Endothelial cell of umbilical vein (primary cell): ENCODE measurements at regions of chr6 and their contacts with region 1.

Region 1: DNA sequence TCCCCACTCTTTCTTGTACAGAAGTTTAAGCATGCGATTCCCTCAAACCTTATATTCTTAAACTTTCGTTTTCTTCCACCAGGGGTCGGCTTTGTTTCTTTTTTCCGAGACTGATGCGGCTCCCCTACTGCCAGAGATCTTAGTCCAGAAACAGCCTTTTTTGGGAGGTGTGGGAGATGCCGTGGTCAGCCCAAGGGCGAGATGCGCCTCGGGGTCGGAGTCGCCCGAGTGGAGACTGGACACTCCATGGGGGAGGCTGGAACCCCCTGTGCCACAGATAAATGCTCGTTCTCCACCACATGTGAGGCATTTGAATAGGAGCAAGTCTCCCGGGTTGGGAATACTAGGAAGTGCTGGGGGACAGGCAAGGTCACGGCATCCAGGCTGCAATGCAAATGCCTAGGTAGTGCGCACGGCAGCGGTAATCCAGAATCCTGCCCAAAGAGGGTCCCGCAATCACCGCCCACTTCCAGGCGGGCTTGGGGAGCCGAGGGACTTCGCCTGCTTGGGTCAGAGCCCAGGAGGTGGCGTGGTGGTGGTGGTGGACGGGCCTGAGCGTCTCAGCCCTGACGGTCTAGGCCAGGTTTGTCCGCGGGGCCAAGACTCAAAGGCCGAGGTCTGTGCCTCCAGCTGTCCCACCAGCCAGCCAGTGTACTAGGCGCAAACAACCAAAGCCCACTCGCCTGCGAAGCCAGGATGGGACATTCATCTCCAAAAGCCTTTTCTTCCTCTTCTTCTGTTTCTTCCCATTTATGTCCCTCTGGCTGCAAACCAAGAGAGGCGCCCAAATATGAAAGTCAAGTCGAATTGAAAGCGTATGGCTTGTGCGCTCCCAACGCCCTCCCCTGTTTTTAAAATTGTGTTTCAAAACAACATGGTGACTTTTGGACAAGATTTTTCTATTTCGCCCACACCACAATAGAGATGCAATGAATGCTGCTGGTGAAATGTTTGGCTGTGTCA is 39.3 kb upstream of the OSTM1 start:
- DNase-seq: peak; percentile 67
- H3K4me3 ChIP-seq: no peak overlapping the region
- H3K27ac ChIP-seq: no peak overlapping the region
- H3K4me1 ChIP-seq: peaks cover 24% of the 10 kb centered on the region
- H3K27me3 ChIP-seq: peaks cover 57 to 70% of the 10 kb centered on the region in 2 experiments
- CTCF ChIP-seq: peak; percentile 16 to 32
- POLR2A ChIP-seq: no peak

Region 2: DNA sequence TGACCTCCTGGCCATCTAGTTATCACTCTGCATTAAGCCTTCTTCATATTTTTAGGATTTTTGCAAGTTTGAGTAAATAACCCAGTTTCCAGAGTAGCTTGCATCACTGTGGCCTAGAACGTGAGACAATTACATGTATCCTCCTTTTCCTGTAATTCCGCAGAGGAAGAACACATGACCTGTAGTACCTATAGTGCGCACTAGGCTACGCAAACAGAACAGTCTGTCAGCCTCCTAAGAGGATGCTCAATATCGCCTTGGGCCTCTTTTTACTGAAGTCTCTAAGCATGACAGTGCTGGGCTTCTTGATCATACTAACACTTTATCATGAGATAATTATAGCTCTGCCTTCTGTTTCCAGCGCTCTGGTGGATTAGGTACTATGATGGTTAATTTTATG is 31.8 kb after region 1 on chr6:
- CTCF ChIA-PET with region 1: no interaction called
- POLR2A ChIA-PET with region 1: no interaction called
- dilution Hi-C with region 1: no loop called
- intact Hi-C with region 1: no loop called
- DNase-seq: no peak
- H3K4me3 ChIP-seq: no peak overlapping the region
- H3K27ac ChIP-seq: no peak overlapping the region
- H3K4me1 ChIP-seq: no peaks in the 10 kb centered on the region
- H3K27me3 ChIP-seq: peaks cover 18 to 34% of the 10 kb centered on the region in 2 experiments
- CTCF ChIP-seq: no peak
- POLR2A ChIP-seq: no peak

Region 3: DNA sequence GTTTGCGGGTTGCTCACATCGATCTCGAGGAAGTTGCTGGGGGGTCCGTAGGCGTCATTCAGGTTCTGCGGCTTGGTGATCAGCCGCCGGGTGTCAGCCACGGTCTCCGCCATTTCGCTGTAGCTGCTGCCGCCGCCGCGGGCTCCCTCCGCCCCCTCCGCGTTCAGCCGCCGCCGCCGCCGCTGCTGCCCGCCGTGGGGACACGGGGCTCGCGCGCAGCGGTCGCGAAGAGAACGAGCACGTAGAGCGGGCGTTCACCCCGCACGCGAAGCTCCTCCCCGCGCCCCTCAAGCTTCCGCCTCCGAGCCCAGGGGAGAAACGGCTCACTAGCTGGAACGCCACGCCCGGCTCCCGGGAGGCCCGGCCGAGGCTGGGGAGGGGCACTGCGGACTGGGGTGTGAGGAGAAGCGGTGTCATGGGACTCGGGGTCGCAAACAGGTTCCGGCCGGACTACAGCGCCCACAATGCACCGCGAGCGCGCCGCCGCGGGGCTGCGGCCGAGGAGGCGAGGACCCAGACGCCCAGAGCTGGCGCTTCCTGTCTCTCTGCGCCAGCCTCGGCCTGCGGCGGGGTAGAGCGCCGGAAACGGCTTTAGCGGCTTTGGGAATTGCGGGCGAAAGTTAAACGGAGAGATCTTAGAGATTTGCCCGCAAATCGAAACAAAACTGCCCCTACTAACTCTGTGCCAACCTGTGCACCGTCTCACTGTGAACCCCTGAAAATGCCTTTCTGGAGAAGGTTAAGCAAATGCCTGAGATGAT is 147.2 kb after region 1 on chr6 and contains the start of gene SNX3:
- CTCF ChIA-PET with region 1: interaction called, 6 read pairs
- POLR2A ChIA-PET with region 1: no interaction called
- dilution Hi-C with region 1: no loop called
- intact Hi-C with region 1: loop called (anchors 1 kb)
- DNase-seq: peak; percentile 98
- H3K4me3 ChIP-seq: peak within 1 kb of the TSS; percentile 81 to 95 (median 85)
- H3K27ac ChIP-seq: peak within 1 kb of the TSS; percentile 59
- H3K4me1 ChIP-seq: peaks cover 14% of the 10 kb centered on the region
- H3K27me3 ChIP-seq: no peaks in the 10 kb centered on the region
- CTCF ChIP-seq: peak in 1 of 2 donors; percentile 2
- POLR2A ChIP-seq: peak; percentile 63
- total RNA-seq, gene SNX3: 141 and 155 TPM in 2 replicates

Region 4: DNA sequence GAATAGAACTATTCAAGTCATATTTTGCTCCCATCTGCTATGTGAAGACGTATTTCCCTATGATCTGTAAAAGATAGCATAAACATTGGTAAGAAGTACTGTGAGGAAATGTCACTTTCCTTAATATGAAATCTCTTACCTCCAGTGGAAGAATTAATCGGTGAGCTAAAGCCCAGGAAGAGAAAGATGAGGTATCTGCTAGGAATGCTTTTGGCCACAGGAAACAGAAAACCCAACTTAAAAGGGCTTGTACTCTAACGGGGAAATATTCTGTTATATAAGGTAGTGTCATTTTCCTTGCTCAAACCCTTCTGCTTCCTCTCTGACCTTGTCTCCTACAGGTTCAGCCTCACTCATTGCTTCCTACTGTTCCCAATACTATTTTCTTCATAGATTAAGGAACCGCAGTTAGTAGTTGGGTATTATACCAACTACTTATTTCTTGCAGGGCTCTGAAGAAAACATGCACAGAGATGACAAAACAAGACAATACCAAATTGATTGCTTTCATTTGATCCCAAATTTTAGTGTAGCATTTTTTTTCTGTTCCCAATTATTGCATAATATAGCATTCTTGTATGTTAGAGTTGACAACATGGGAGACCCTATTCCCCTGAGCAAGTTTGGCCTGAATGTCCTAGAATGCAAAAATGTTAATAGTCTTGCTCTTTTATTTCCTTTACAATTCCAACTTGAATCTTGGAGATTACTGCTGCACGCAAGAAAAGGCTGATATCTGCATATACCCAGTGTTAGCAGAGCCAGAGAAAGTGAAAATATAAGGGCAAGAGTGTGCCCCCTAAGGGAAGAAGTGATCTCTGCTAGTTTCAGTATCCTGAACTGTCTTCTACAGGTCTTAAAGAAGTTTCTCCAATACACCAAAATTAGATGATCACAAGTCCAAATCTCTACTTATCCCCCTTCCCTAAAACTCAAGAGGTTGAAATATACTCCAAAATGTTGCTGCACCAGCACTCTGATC is 246.4 kb after region 1 on chr6:
- CTCF ChIA-PET with region 1: no interaction called
- POLR2A ChIA-PET with region 1: interaction called, 3 read pairs
- dilution Hi-C with region 1: no loop called
- intact Hi-C with region 1: loop called (anchors 5 kb)
- DNase-seq: no peak
- H3K4me3 ChIP-seq: no peak overlapping the region
- H3K27ac ChIP-seq: no peak overlapping the region
- H3K4me1 ChIP-seq: no peaks in the 10 kb centered on the region
- H3K27me3 ChIP-seq: no peaks in the 10 kb centered on the region
- CTCF ChIP-seq: no peak
- POLR2A ChIP-seq: no peak

Region 5: GRCh38 chr6:108518714-108519576 is 405.1 kb after region 1 on chr6:
- CTCF ChIA-PET with region 1: interaction called, 17 read pairs
- POLR2A ChIA-PET with region 1: no interaction called
- dilution Hi-C with region 1: no loop called
- intact Hi-C with region 1: no loop called
- DNase-seq: peak; percentile 13
- H3K4me3 ChIP-seq: no peak overlapping the region
- H3K27ac ChIP-seq: no peak overlapping the region
- H3K4me1 ChIP-seq: no peaks in the 10 kb centered on the region
- H3K27me3 ChIP-seq: no peaks in the 10 kb centered on the region
- CTCF ChIP-seq: peak; percentile 42 to 56
- POLR2A ChIP-seq: no peak

Region 6: DNA sequence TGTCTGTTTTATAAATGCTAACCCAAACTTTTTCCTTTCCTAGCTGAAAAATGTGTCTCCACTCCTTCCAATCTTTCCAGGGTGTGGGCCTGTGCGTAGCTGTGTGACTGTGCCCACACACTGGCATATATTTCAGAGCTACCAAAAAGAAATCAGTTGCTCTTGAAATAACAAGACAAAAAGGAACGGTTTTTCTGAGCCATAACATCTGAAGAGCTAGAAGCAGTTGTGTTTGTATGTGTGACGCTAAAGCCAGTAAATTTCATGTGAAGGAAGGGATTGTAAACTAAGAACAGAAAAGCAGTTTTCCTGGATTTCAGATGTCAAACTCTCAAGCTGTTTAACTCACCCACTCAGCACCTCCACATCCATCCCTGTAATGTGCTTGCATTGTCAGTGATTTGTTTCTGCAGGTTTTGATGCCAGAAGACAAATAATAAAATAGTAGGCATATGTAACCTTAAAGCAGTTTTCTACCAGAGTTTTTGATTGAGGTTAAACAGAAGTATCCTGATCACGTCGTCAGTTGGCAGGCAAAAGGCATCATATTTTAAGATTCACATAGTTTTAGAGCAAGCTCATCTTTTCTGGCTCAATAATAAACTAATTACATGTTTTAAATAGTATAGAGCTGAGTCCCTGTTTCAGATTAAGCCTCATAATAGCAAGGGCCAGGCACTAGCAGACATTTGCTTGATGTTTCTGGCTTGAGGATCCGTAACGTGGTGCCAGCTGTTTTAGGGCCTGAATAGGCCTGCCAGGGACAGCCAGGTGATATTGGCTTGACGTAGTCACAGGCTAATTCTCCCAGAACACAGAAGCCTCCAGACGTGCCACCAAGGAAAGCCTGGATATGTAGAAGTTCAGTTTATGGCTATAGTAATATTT is 537.7 kb after region 1 on chr6:
- CTCF ChIA-PET with region 1: no interaction called
- POLR2A ChIA-PET with region 1: no interaction called
- dilution Hi-C with region 1: no loop called
- intact Hi-C with region 1: no loop called
- DNase-seq: no peak
- H3K4me3 ChIP-seq: no peak overlapping the region
- H3K27ac ChIP-seq: no peak overlapping the region
- H3K4me1 ChIP-seq: peaks cover 9% of the 10 kb centered on the region
- H3K27me3 ChIP-seq: no peaks in the 10 kb centered on the region
- CTCF ChIP-seq: no peak
- POLR2A ChIP-seq: no peak